CD4-positive, alpha-beta T cell (primary cell): ENCODE measurements at regions of chr2 and their contacts with region 1.

Region 1: DNA sequence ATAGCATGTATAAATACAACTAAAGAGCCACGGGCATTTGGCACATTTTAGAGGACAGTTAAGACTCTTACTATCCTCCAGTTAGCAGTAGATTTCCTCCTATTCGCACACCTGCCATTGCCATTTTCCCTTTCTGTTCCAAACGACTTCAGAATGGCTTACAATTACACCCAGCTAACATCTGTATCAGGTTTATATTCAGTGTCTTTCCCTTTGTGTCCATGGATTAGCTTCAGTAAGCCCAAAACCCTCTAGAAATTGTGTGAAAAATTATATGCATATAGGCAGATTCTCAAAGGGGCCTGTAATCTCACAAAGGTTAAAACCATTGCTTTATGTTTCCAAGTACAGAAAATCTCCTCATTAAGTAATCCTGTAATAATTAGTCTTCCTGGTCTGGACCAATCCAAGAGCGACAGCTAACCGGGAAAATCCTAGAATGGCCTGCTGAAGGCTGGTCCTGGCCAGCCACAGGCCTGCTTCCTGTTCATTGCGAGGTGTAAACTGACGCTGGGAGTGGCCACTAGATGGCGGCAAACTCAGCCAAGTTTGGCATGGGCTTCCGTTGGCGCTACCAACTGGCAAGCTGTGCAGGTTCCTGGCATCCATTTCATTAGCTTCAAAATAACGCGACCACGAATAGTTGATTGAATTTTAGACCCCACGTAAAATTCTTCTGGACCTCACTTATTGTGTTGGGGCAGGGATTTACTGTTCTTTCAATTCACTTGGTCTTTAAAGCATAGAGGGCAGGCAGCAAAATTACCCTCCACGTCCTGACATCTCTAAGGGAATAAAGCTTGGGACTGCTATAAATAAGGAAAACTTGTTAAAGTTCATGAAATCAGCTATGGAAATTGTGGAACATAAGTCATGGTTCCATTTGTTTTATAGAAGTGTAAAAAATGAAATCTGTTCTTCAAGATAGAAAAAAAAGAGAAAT is 17.1 kb downstream of the ARHGAP25 start:
- DNase-seq: peak; percentile 88 to 96 (median 90)
- ATAC-seq: peak; percentile 91
- H3K4me3 ChIP-seq: no peak overlapping the region
- H3K4me3 Mint-ChIP-seq: peak overlapping the region; percentile 12
- H3K27ac ChIP-seq: peak overlapping the region; percentile 52 to 66
- H3K27ac Mint-ChIP-seq: peak overlapping the region; percentile 94
- H3K4me1 ChIP-seq: peaks cover 81% of the 10 kb centered on the region
- H3K4me1 Mint-ChIP-seq: peaks cover 86% of the 10 kb centered on the region
- H3K27me3 ChIP-seq: no peaks in the 10 kb centered on the region
- H3K27me3 Mint-ChIP-seq: no peaks in the 10 kb centered on the region
- CTCF ChIP-seq: peak; percentile 93

Region 2: GRCh38 chr2:68263632-68264031 is 488.0 kb before region 1 on chr2:
- CTCF ChIA-PET with region 1: no interaction called
- POLR2A ChIA-PET with region 1: no interaction called
- intact Hi-C with region 1: no loop called
- DNase-seq: no peak
- ATAC-seq: no peak
- H3K4me3 ChIP-seq: no peak overlapping the region
- H3K4me3 Mint-ChIP-seq: no peak overlapping the region
- H3K27ac ChIP-seq: no peak overlapping the region
- H3K27ac Mint-ChIP-seq: no peak overlapping the region
- H3K4me1 ChIP-seq: no peaks in the 10 kb centered on the region
- H3K4me1 Mint-ChIP-seq: no peaks in the 10 kb centered on the region
- H3K27me3 ChIP-seq: no peaks in the 10 kb centered on the region
- H3K27me3 Mint-ChIP-seq: no peaks in the 10 kb centered on the region
- CTCF ChIP-seq: no peak

Region 3: DNA sequence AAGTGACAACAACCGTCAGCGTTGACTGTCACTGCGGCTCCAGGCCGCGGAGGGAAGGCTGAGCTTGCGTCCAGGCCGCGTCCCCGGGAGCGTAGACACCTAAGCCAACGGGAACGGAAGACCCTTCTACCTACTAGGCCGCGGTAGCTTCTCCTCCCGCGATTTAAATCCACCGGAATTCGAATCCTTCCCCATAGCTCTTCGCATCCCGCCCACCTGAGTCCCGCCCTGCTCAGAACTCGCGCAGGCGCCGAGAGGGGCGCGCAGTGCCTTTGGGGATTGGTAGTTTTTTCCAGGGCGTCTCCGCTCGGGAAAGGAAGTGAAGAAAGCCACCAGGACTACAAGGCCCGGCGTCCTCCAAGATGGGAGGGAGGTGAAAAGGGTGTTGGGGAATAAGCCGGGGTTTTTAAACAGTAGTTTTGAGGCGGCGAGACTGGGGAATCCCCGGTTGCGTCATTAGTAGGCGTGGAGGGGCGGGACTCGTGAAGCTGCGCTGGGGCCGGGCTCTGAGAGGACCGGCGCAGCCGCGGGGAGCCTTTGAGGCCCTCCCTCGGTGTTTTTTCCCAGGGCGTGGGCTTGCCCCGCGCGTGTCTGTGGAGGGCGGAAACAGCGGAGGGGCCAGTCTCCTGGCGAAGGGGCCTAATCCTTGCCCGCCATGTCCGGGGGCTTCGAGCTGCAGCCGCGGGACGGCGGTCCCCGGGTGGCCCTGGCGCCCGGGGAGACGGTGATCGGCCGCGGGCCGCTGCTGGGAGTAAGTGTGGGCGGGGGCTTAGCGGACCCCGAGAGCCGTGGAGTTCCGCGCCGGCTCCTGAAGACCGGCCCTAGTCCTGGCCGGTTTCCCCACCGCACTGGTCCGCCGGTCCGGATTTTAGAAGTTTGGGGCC is 284.3 kb before region 1 on chr2 and contains the starts of genes APLF and FBXO48:
- CTCF ChIA-PET with region 1: interaction called, 12 read pairs
- POLR2A ChIA-PET with region 1: interaction called, 6 read pairs
- intact Hi-C with region 1: loop called in 1 of 2 experiments (anchors 5 kb)
- DNase-seq: peak; percentile 94 to 100 (median 98)
- ATAC-seq: peak; percentile 88
- H3K4me3 ChIP-seq: peak within 1 kb of the TSS; percentile 90
- H3K4me3 Mint-ChIP-seq: peak within 1 kb of the TSS; percentile 95
- H3K27ac ChIP-seq: peak within 1 kb of the TSS; percentile 92 to 93
- H3K27ac Mint-ChIP-seq: peak within 1 kb of the TSS; percentile 89
- H3K4me1 ChIP-seq: peaks cover 24% of the 10 kb centered on the region
- H3K4me1 Mint-ChIP-seq: peaks cover 44% of the 10 kb centered on the region
- H3K27me3 ChIP-seq: no peaks in the 10 kb centered on the region
- H3K27me3 Mint-ChIP-seq: no peaks in the 10 kb centered on the region
- CTCF ChIP-seq: no peak
- total RNA-seq, gene APLF: 4.1 to 4.3 TPM
- total RNA-seq, gene FBXO48: 0.44 to 0.50 TPM

Region 4: GRCh38 chr2:68721482-68722101 is 30.1 kb before region 1 on chr2:
- CTCF ChIA-PET with region 1: interaction called, 22 read pairs
- POLR2A ChIA-PET with region 1: interaction called, 26 read pairs
- intact Hi-C with region 1: loop called in 1 of 2 experiments (anchors 5 kb)
- DNase-seq: peak in 6 of 14 experiments; percentile 25 to 82 (median 68)
- ATAC-seq: peak; percentile 83
- H3K4me3 ChIP-seq: peak overlapping the region; percentile 19
- H3K4me3 Mint-ChIP-seq: peak overlapping the region; percentile 82
- H3K27ac ChIP-seq: peak overlapping the region; percentile 72 to 76
- H3K27ac Mint-ChIP-seq: peak overlapping the region; percentile 83
- H3K4me1 ChIP-seq: peaks cover 88% of the 10 kb centered on the region
- H3K4me1 Mint-ChIP-seq: peaks cover 96% of the 10 kb centered on the region
- H3K27me3 ChIP-seq: no peaks in the 10 kb centered on the region
- H3K27me3 Mint-ChIP-seq: no peaks in the 10 kb centered on the region
- CTCF ChIP-seq: no peak

Region 5: GRCh38 chr2:68766376-68766845 is 14.7 kb after region 1 on chr2:
- CTCF ChIA-PET with region 1: interaction called, 49 read pairs
- POLR2A ChIA-PET with region 1: interaction called, 238 read pairs
- intact Hi-C with region 1: loop called (anchors 1 to 2 kb)
- DNase-seq: peak; percentile 48 to 89 (median 66)
- ATAC-seq: peak; percentile 71
- H3K4me3 ChIP-seq: peak overlapping the region; percentile 42
- H3K4me3 Mint-ChIP-seq: peak overlapping the region; percentile 84
- H3K27ac ChIP-seq: peak overlapping the region; percentile 89 to 93
- H3K27ac Mint-ChIP-seq: peak overlapping the region; percentile 94
- H3K4me1 ChIP-seq: peaks cover 83% of the 10 kb centered on the region
- H3K4me1 Mint-ChIP-seq: peaks cover 98% of the 10 kb centered on the region
- H3K27me3 ChIP-seq: no peaks in the 10 kb centered on the region
- H3K27me3 Mint-ChIP-seq: no peaks in the 10 kb centered on the region
- CTCF ChIP-seq: no peak

Region 6: GRCh38 chr2:68796294-68796905 is 44.7 kb after region 1 on chr2:
- CTCF ChIA-PET with region 1: interaction called, 10 read pairs
- POLR2A ChIA-PET with region 1: interaction called, 7 read pairs
- intact Hi-C with region 1: loop called in 1 of 2 experiments (anchors 1 kb)
- DNase-seq: peak in 3 of 14 experiments; percentile 50 to 61 (median 51)
- ATAC-seq: peak; percentile 87
- H3K4me3 ChIP-seq: no peak overlapping the region
- H3K4me3 Mint-ChIP-seq: peak overlapping the region; percentile 76
- H3K27ac ChIP-seq: peak overlapping the region; percentile 25 to 58
- H3K27ac Mint-ChIP-seq: peak overlapping the region; percentile 91
- H3K4me1 ChIP-seq: peaks cover 40% of the 10 kb centered on the region
- H3K4me1 Mint-ChIP-seq: peaks cover 89% of the 10 kb centered on the region
- H3K27me3 ChIP-seq: no peaks in the 10 kb centered on the region
- H3K27me3 Mint-ChIP-seq: no peaks in the 10 kb centered on the region
- CTCF ChIP-seq: no peak

Region 7: DNA sequence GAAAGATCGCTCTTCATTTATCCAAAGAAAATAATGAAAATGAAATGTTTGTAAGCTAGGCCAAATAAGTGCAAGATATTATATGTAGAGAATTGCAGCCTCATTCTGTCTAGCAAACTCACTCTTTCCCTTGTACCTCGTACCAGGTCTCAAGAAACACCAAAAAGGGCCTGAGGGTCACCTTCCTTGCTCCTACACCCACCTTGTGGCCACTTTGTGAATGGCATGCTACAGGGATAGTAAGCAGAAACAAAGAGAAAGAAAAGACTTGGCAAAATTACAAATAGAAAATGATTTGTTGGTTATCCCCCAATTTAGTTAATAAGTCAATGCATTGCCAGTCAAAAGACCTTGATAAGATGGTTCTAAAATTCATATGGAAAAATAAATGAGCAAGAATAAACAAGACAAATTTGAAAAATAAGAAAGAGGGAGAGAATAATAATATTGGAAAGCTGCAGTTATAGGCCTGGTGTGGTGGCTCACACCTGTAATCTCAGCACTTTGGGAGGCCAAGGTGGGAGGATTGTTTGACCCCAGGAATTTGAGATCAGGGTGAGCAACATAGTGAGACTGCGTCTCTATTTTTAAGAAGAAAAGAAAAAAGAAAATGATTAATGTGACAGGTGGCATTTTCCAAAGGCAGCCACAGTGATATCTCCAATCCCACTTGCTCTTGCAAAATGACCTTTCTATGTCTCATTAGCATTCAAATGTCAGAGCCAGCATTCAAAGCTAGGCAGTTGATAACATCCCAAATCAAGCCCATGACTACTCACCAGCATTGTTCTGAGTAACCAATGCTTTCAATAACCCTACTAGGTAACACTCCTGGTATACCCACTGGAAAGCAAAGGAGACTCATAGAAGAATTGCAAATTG is 158.4 kb after region 1 on chr2:
- CTCF ChIA-PET with region 1: interaction called, 14 read pairs
- POLR2A ChIA-PET with region 1: interaction called, 10 read pairs
- intact Hi-C with region 1: loop called (anchors 1 kb)
- DNase-seq: peak; percentile 44 to 84 (median 66)
- ATAC-seq: no peak
- H3K4me3 ChIP-seq: no peak overlapping the region
- H3K4me3 Mint-ChIP-seq: no peak overlapping the region
- H3K27ac ChIP-seq: no peak overlapping the region
- H3K27ac Mint-ChIP-seq: no peak overlapping the region
- H3K4me1 ChIP-seq: peaks cover 60% of the 10 kb centered on the region
- H3K4me1 Mint-ChIP-seq: peaks cover 36% of the 10 kb centered on the region
- H3K27me3 ChIP-seq: no peaks in the 10 kb centered on the region
- H3K27me3 Mint-ChIP-seq: no peaks in the 10 kb centered on the region
- CTCF ChIP-seq: peak; percentile 88